CD8-positive, alpha-beta T cell (primary cell): ENCODE measurements at regions of chr5 and their contacts with region 1.

Region 1: GRCh38 chr5:82351754-82352145 is 73.6 kb upstream of the RPS23 start:
- DNase-seq: peak in 2 of 9 experiments; percentile 66 to 73
- ATAC-seq: peak; percentile 61
- H3K4me3 ChIP-seq: no peak overlapping the region
- H3K4me3 Mint-ChIP-seq: no peak overlapping the region
- H3K27ac ChIP-seq: no peak overlapping the region
- H3K27ac Mint-ChIP-seq: no peak overlapping the region
- H3K4me1 ChIP-seq: peaks cover 4% of the 10 kb centered on the region
- H3K4me1 Mint-ChIP-seq: peaks cover 7% of the 10 kb centered on the region
- H3K27me3 ChIP-seq: no peaks in the 10 kb centered on the region
- H3K27me3 Mint-ChIP-seq: no peaks in the 10 kb centered on the region
- CTCF ChIP-seq: peak; percentile 77

Region 2: GRCh38 chr5:82364497-82364896 is 12.7 kb after region 1 on chr5:
- CTCF ChIA-PET with region 1: interaction called, 20 read pairs
- POLR2A ChIA-PET with region 1: no interaction called
- intact Hi-C with region 1: no loop called
- DNase-seq: no peak
- ATAC-seq: no peak
- H3K4me3 ChIP-seq: no peak overlapping the region
- H3K4me3 Mint-ChIP-seq: no peak overlapping the region
- H3K27ac ChIP-seq: no peak overlapping the region
- H3K27ac Mint-ChIP-seq: no peak overlapping the region
- H3K4me1 ChIP-seq: no peaks in the 10 kb centered on the region
- H3K4me1 Mint-ChIP-seq: no peaks in the 10 kb centered on the region
- H3K27me3 ChIP-seq: no peaks in the 10 kb centered on the region
- H3K27me3 Mint-ChIP-seq: peaks cover 4% of the 10 kb centered on the region
- CTCF ChIP-seq: no peak

Region 3: GRCh38 chr5:82375531-82376244 is 23.9 kb after region 1 on chr5:
- CTCF ChIA-PET with region 1: no interaction called
- POLR2A ChIA-PET with region 1: no interaction called
- intact Hi-C with region 1: no loop called
- DNase-seq: no peak
- ATAC-seq: no peak
- H3K4me3 ChIP-seq: no peak overlapping the region
- H3K4me3 Mint-ChIP-seq: no peak overlapping the region
- H3K27ac ChIP-seq: no peak overlapping the region
- H3K27ac Mint-ChIP-seq: no peak overlapping the region
- H3K4me1 ChIP-seq: no peaks in the 10 kb centered on the region
- H3K4me1 Mint-ChIP-seq: no peaks in the 10 kb centered on the region
- H3K27me3 ChIP-seq: no peaks in the 10 kb centered on the region
- H3K27me3 Mint-ChIP-seq: no peaks in the 10 kb centered on the region
- CTCF ChIP-seq: no peak

Region 4: GRCh38 chr5:82641331-82642003 is 289.7 kb after region 1 on chr5:
- CTCF ChIA-PET with region 1: interaction called, 6 read pairs
- POLR2A ChIA-PET with region 1: no interaction called
- intact Hi-C with region 1: loop called (anchors 1 to 5 kb)
- DNase-seq: peak in 2 of 9 experiments; percentile 22 to 45
- ATAC-seq: no peak
- H3K4me3 ChIP-seq: no peak overlapping the region
- H3K4me3 Mint-ChIP-seq: no peak overlapping the region
- H3K27ac ChIP-seq: no peak overlapping the region
- H3K27ac Mint-ChIP-seq: no peak overlapping the region
- H3K4me1 ChIP-seq: no peaks in the 10 kb centered on the region
- H3K4me1 Mint-ChIP-seq: no peaks in the 10 kb centered on the region
- H3K27me3 ChIP-seq: no peaks in the 10 kb centered on the region
- H3K27me3 Mint-ChIP-seq: no peaks in the 10 kb centered on the region
- CTCF ChIP-seq: no peak

Region 5: DNA sequence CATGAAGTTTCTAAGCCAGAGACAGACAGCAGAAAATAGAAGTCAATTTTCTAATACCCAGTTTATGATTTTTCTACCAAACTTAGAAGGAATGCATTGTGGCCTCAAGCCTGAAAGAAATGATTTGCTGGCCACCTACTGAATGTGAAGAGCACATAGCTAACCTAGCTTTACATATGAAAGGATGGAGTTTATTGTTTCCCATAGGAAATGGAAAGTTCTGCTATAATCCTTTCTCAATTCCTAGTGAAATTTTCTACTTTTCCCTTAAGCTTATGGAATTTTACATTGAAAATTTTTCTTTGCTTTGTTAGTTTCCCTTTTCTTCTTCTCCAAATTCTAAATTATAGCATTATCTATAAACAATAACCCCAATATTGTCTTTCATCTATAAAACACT is 615.3 kb after region 1 on chr5:
- CTCF ChIA-PET with region 1: no interaction called
- POLR2A ChIA-PET with region 1: no interaction called
- intact Hi-C with region 1: no loop called
- DNase-seq: no peak
- ATAC-seq: no peak
- H3K4me3 ChIP-seq: no peak overlapping the region
- H3K4me3 Mint-ChIP-seq: no peak overlapping the region
- H3K27ac ChIP-seq: no peak overlapping the region
- H3K27ac Mint-ChIP-seq: no peak overlapping the region
- H3K4me1 ChIP-seq: no peaks in the 10 kb centered on the region
- H3K4me1 Mint-ChIP-seq: no peaks in the 10 kb centered on the region
- H3K27me3 ChIP-seq: no peaks in the 10 kb centered on the region
- H3K27me3 Mint-ChIP-seq: no peaks in the 10 kb centered on the region
- CTCF ChIP-seq: no peak

Region 6: GRCh38 chr5:83076742-83077661 is 725.3 kb after region 1 on chr5 and contains the starts of genes TMEM167A and XRCC4:
- CTCF ChIA-PET with region 1: no interaction called
- POLR2A ChIA-PET with region 1: no interaction called
- intact Hi-C with region 1: loop called (anchors 1 to 10 kb)
- DNase-seq: peak; percentile 84 to 98 (median 92)
- ATAC-seq: peak; percentile 98
- H3K4me3 ChIP-seq: peak within 1 kb of the TSS; percentile 81 to 93
- H3K4me3 Mint-ChIP-seq: peak within 1 kb of the TSS; percentile 99
- H3K27ac ChIP-seq: peak within 1 kb of the TSS; percentile 77 to 96
- H3K27ac Mint-ChIP-seq: peak within 1 kb of the TSS; percentile 99
- H3K4me1 ChIP-seq: peaks cover 28% of the 10 kb centered on the region
- H3K4me1 Mint-ChIP-seq: peaks cover 59% of the 10 kb centered on the region
- H3K27me3 ChIP-seq: no peaks in the 10 kb centered on the region
- H3K27me3 Mint-ChIP-seq: no peaks in the 10 kb centered on the region
- CTCF ChIP-seq: no peak
- total RNA-seq, gene TMEM167A: 51.6 to 59.0 TPM
- total RNA-seq, gene XRCC4: 1.1 to 1.3 TPM

Region 7: DNA sequence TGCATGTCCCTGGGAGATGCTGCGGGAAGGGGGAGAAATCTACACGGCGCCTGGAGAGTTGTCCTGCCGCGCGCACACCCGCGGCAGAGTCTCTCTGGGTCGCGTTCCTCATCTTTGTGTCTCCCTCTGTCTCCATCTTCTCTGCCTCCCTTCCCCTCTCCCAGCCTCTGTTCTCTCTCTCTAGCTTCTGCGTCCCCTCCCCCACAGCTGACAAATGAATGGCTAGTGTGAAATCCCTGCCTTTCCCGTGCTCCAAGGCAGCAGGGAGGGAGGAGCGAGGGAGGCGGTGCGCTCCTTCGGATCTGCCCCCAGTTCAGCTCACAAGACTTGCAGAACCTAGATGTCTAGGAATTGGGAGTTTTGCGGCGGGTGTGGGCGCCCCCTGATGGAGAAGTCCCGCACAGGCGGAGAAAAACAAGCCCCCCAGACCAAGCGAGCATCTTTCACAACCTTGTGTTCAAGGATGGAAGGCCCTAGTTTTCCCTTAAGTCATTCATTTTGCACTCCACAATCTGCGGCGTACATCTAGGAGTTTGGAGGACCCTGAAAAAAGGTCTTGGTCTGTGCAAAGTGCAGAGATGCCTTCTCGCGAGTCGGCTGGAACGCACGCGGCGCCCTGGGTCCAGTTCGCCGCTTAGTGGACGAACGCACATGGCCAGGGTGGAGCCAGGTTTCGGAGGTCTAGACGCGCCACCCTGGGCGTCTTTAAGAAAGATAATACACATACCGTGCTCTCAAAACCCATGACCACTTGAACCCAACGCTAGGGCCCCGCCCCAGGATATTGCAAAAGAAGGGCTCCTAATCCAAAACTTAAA is 1121.8 kb after region 1 on chr5:
- CTCF ChIA-PET with region 1: no interaction called
- POLR2A ChIA-PET with region 1: no interaction called
- intact Hi-C with region 1: loop called in 1 of 2 experiments (anchors 5 kb)
- DNase-seq: peak in 6 of 9 experiments; percentile 19 to 51 (median 28)
- ATAC-seq: peak; percentile 55
- H3K4me3 ChIP-seq: peak overlapping the region; percentile 21 to 34
- H3K4me3 Mint-ChIP-seq: peak overlapping the region; percentile 76
- H3K27ac ChIP-seq: no peak overlapping the region
- H3K27ac Mint-ChIP-seq: no peak overlapping the region
- H3K4me1 ChIP-seq: peaks cover 27% of the 10 kb centered on the region
- H3K4me1 Mint-ChIP-seq: peaks cover 35% of the 10 kb centered on the region
- H3K27me3 ChIP-seq: peaks cover 19 to 29% of the 10 kb centered on the region in 2 experiments
- H3K27me3 Mint-ChIP-seq: peaks cover 61% of the 10 kb centered on the region
- CTCF ChIP-seq: no peak